T-cell (primary cell): ENCODE measurements at regions of chr6 and their contacts with region 1.

Region 1: DNA sequence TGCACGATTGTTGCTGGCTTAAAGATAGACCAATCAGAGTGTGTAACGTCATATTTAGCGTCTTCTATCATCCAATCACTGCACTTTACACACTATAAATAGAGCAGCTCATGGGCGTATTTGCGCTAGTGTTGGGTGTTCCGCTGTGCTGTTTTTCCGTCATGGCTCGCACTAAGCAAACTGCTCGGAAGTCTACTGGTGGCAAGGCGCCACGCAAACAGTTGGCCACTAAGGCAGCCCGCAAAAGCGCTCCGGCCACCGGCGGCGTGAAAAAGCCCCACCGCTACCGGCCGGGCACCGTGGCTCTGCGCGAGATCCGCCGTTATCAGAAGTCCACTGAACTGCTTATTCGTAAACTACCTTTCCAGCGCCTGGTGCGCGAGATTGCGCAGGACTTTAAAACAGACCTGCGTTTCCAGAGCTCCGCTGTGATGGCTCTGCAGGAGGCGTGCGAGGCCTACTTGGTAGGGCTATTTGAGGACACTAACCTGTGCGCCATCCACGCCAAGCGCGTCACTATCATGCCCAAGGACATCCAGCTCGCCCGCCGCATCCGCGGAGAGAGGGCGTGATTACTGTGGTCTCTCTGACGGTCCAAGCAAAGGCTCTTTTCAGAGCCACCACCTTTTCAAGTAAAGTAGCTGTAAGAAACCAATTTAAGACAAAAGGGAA is 57.9 kb downstream of the TRIM38 start:
- DNase-seq: peak; percentile 63 to 94 (median 76)
- ATAC-seq: peak; percentile 49 to 67 (median 62)
- H3K4me3 ChIP-seq: peak overlapping the region; percentile 76 to 81
- H3K4me3 Mint-ChIP-seq: peak overlapping the region; percentile 85 to 99 (median 97)
- H3K27ac ChIP-seq: peak overlapping the region; percentile 93
- H3K27ac Mint-ChIP-seq: peak overlapping the region; percentile 99 to 100
- H3K4me1 ChIP-seq: peaks cover 13 to 37% of the 10 kb centered on the region in 2 experiments
- H3K4me1 Mint-ChIP-seq: peaks cover 30 to 38% (median 33%) of the 10 kb centered on the region in 3 donors
- H3K27me3 ChIP-seq: no peaks in the 10 kb centered on the region
- H3K27me3 Mint-ChIP-seq: no peaks in the 10 kb centered on the region

Region 2: GRCh38 chr6:24720131-24720603 is 1300.3 kb before region 1 on chr6:
- CTCF ChIA-PET with region 1: no interaction called
- POLR2A ChIA-PET with region 1: interaction called in 1 of 2 experiments, 16 read pairs
- DNase-seq: peak; percentile 42 to 90 (median 73)
- ATAC-seq: peak; percentile 7 to 36 (median 23)
- H3K4me3 ChIP-seq: peak overlapping the region; percentile 99 to 100
- H3K4me3 Mint-ChIP-seq: peak overlapping the region; percentile 81 to 100 (median 92)
- H3K27ac ChIP-seq: peak overlapping the region; percentile 99
- H3K27ac Mint-ChIP-seq: peak overlapping the region; percentile 98 to 100
- H3K4me1 ChIP-seq: peaks cover 33 to 37% of the 10 kb centered on the region in 2 experiments
- H3K4me1 Mint-ChIP-seq: peaks cover 43 to 54% (median 43%) of the 10 kb centered on the region in 3 donors
- H3K27me3 ChIP-seq: no peaks in the 10 kb centered on the region
- H3K27me3 Mint-ChIP-seq: no peaks in the 10 kb centered on the region

Region 3: DNA sequence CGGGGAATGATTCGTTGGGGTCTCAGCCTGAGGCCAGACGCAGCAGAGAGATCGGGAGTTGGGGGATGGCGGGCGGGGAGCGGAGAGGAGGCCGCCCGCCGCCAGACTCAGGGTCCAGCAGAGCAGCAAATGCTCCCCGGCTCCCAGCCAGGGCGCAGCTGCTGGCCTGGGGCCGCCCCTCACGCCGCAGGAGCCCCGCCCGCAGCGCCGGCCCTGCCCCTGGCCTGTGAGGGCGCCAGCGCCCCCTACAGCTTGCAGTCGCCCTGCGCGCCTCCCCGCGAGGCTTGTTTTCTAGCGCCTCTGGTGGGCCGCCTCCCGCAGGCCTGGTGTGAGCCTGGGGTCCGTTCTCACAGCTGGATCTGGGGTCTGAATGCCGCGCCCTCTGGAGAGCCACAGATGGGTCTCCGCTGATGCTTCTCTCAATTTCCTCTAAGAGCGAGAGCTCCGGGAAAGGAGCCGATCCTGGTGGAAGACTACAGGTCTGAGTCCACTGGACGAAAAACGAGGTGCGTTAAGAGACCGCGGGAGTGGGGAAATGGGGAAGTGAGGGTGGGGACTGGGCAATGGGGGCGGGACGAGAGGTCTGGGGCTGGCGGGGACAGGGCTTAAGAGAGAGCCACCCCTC is 27.9 kb before region 1 on chr6:
- CTCF ChIA-PET with region 1: interaction called, 8 to 15 read pairs
- POLR2A ChIA-PET with region 1: interaction called, 11 to 19 read pairs
- DNase-seq: peak; percentile 77 to 96 (median 89)
- ATAC-seq: peak; percentile 94 to 98 (median 96)
- H3K4me3 ChIP-seq: peak overlapping the region; percentile 70 to 89
- H3K4me3 Mint-ChIP-seq: peak overlapping the region; percentile 91 to 95 (median 94)
- H3K27ac ChIP-seq: peak overlapping the region; percentile 77
- H3K27ac Mint-ChIP-seq: peak overlapping the region; percentile 92 to 94
- H3K4me1 ChIP-seq: peaks cover 9 to 17% of the 10 kb centered on the region in 2 experiments
- H3K4me1 Mint-ChIP-seq: peaks cover 21 to 36% (median 27%) of the 10 kb centered on the region in 3 donors
- H3K27me3 ChIP-seq: no peaks in the 10 kb centered on the region
- H3K27me3 Mint-ChIP-seq: no peaks in the 10 kb centered on the region

Region 4: GRCh38 chr6:26031595-26032339 is 11.3 kb after region 1 on chr6:
- CTCF ChIA-PET with region 1: interaction called, 4 to 33 read pairs
- POLR2A ChIA-PET with region 1: interaction called, 62 to 147 read pairs
- DNase-seq: peak; percentile 61 to 95 (median 87)
- ATAC-seq: peak; percentile 68 to 72 (median 70)
- H3K4me3 ChIP-seq: peak overlapping the region; percentile 61 to 84
- H3K4me3 Mint-ChIP-seq: peak overlapping the region; percentile 90 to 95 (median 92)
- H3K27ac ChIP-seq: peak overlapping the region; percentile 74
- H3K27ac Mint-ChIP-seq: peak overlapping the region; percentile 94 to 98
- H3K4me1 ChIP-seq: peaks cover 30 to 32% of the 10 kb centered on the region in 2 experiments
- H3K4me1 Mint-ChIP-seq: peaks cover 48 to 53% (median 50%) of the 10 kb centered on the region in 3 donors
- H3K27me3 ChIP-seq: no peaks in the 10 kb centered on the region
- H3K27me3 Mint-ChIP-seq: peaks cover 0 to 2% of the 10 kb centered on the region in 2 donors

Region 5: GRCh38 chr6:26249957-26250697 is 229.7 kb after region 1 on chr6:
- CTCF ChIA-PET with region 1: no interaction called
- POLR2A ChIA-PET with region 1: interaction called in 1 of 2 experiments, 10 read pairs
- DNase-seq: peak; percentile 58 to 87 (median 79)
- ATAC-seq: peak; percentile 71 to 76 (median 76)
- H3K4me3 ChIP-seq: peak overlapping the region; percentile 74 to 97
- H3K4me3 Mint-ChIP-seq: peak overlapping the region; percentile 93 to 98 (median 93)
- H3K27ac ChIP-seq: peak overlapping the region; percentile 83
- H3K27ac Mint-ChIP-seq: peak overlapping the region; percentile 88 to 93
- H3K4me1 ChIP-seq: peaks cover 12 to 24% of the 10 kb centered on the region in 2 experiments
- H3K4me1 Mint-ChIP-seq: peaks cover 29 to 47% (median 42%) of the 10 kb centered on the region in 3 donors
- H3K27me3 ChIP-seq: no peaks in the 10 kb centered on the region
- H3K27me3 Mint-ChIP-seq: no peaks in the 10 kb centered on the region